ENCODE measurements at regions of chr2 and their contacts with region 1.

Region 1: DNA sequence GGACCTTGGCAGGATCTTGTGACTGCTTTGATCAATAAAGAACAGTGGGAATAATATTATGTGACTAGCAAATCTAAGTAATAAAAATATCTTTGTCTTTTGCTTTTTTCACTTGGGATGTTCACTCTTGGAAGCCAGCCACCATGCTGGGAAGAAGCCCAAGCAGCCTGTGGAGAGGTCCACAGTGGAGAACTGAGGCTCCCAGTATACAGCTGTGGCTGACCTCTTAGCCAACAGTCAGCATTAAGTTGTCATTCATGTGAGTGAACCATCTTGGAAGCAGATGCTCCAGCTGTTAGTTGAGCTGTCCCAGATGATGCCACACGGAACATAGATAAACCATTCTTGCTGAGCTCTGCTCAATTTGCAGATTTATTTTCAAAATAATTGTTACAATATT is 160.0 kb downstream of the OSR1 start:
- DNase-seq: no peak

Region 2: DNA sequence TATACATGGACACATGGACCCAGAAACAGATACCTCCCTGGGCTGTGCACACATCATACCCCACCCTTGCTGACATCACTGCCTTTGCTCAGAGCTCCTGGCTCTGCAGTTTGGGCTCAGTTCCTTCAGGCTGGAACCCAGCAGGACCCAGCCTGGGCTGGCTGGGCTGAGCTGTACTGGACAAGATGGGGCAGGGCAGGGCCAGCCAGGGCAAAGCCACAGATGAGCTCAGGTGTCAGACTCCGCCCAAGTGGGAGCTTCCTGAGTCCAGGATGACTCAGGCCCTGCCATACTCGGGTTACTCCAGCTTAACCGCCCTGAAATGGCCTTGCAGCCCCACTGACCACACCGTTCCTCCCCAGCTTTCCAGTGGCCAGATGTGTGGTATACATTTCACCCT is 124.9 kb before region 1 on chr2:
- intact Hi-C with region 1: loop called in 1 of 2 experiments (anchors 5 kb)
- DNase-seq: no peak

Region 3: GRCh38 chr2:19244460-19245363 is 46.3 kb after region 1 on chr2:
- intact Hi-C with region 1: no loop called
- DNase-seq: no peak

Region 4: GRCh38 chr2:19332503-19332902 is 134.1 kb after region 1 on chr2:
- intact Hi-C with region 1: no loop called
- DNase-seq: no peak

Measured in posterior vena cava (tissue), 2 donors.